ENCODE measurements at regions of chr16 and their contacts with region 1.

Region 1: DNA sequence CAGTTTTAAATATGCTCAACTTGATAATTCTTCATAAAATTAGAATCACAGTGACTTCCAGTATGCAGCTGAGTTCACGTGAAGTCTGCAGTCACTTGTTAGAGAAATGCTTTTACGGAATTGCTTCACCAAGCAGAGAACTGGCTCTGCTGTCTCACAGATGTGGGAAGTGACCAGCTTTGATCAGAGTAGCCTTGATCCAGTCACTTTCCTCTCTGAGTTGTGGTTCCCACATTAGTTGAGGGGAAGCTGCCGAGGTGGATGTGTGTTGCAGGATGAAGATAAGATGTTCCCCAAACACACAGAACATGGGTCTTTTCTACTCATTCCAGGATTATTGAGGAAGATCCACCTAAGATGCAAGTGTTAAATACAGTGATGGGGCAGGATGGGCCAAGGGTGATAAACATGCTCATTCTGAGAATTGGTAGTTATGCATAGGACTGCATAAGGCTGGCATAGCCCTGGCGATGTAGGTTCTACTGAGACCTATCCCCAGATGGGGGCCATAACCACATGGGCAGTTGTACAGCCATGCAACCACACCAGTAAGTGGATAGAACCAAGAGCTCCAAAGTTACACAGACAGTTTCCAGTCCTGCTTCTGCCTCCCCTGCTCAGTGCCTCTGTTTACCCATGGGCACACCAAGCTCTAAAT is 168.9 kb upstream of the MAF start:
- DNase-seq: no peak
- H3K27ac ChIP-seq: no peak overlapping the region
- CTCF ChIP-seq: no peak

Region 2: GRCh38 chr16:79451196-79451816 is 318.1 kb before region 1 on chr16:
- CTCF ChIA-PET with region 1: no interaction called
- POLR2A ChIA-PET with region 1: interaction called, 14 read pairs
- DNase-seq: no peak
- H3K27ac ChIP-seq: no peak overlapping the region
- CTCF ChIP-seq: no peak